PC-3 (cell line): ENCODE measurements at regions of chr7 and their contacts with region 1.

Region 1: GRCh38 chr7:74206589-74207120 is 3.2 kb upstream of the LAT2 start:
- DNase-seq: peak; percentile 87
- ATAC-seq: peak; percentile 52
- H3K4me3 ChIP-seq: peak overlapping the region; percentile 23; the same call in 1 of the 2 replicates
- H3K27ac ChIP-seq: no peak overlapping the region
- H3K4me1 ChIP-seq: peaks cover 13% of the 10 kb centered on the region
- H3K27me3 ChIP-seq: no peaks in the 10 kb centered on the region
- CTCF ChIP-seq: peak; percentile 92

Region 2: DNA sequence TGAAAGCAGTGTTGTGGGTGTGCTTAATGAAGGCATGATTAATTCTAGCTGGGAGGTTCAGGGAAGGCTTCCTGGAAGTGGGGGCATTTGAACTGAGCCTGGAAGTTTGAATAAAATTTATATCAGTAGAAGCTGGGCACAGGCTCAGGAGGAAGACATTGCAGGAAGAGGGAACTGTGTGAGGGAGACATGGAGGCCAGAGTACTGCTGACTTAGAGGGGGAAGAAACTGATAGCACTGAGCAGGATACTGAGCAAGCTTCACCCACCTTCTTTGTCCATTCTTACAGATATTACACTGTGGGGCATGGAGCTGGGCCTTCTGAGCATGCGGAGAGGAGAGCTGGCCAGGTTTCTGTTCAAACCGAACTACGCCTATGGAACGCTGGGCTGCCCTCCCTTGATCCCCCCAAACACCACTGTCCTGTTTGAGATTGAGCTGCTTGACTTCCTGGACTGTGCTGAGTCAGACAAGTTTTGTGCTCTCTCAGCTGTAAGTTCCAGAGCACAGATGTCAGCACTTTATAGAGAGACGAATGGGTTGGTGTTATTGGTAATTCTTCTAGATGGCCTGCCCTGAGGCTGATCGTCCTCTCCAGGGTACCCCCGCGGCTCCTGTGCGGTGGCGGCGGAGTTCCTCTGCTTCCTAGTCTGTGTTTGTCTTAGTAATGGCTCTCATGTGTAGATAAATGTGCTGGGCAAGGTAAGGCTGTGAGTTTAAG is 876.6 kb before region 1 on chr7:
- CTCF ChIA-PET with region 1: no interaction called
- POLR2A ChIA-PET with region 1: no interaction called
- intact Hi-C with region 1: no loop called
- DNase-seq: no peak
- ATAC-seq: peak; percentile 59
- H3K4me3 ChIP-seq: no peak overlapping the region
- H3K27ac ChIP-seq: no peak overlapping the region
- H3K4me1 ChIP-seq: no peaks in the 10 kb centered on the region
- H3K27me3 ChIP-seq: no peaks in the 10 kb centered on the region
- CTCF ChIP-seq: no peak

Region 3: GRCh38 chr7:74051629-74052410 is 154.8 kb before region 1 on chr7:
- CTCF ChIA-PET with region 1: interaction called, 4 read pairs
- POLR2A ChIA-PET with region 1: no interaction called
- intact Hi-C with region 1: loop called (anchors 5 kb)
- DNase-seq: peak; percentile 67
- ATAC-seq: peak; percentile 94
- H3K4me3 ChIP-seq: no peak overlapping the region
- H3K27ac ChIP-seq: no peak overlapping the region
- H3K4me1 ChIP-seq: no peaks in the 10 kb centered on the region
- H3K27me3 ChIP-seq: no peaks in the 10 kb centered on the region
- CTCF ChIP-seq: peak; percentile 68

Region 4: GRCh38 chr7:74254129-74254857 is 47.6 kb after region 1 on chr7 and contains the start of gene RFC2:
- CTCF ChIA-PET with region 1: interaction called, 4 read pairs
- POLR2A ChIA-PET with region 1: no interaction called
- intact Hi-C with region 1: loop called (anchors 5 kb)
- DNase-seq: peak; percentile 95
- ATAC-seq: peak; percentile 91
- H3K4me3 ChIP-seq: peak within 1 kb of the TSS; percentile 95
- H3K27ac ChIP-seq: peak within 1 kb of the TSS; percentile 76
- H3K4me1 ChIP-seq: peaks cover 11% of the 10 kb centered on the region
- H3K27me3 ChIP-seq: no peaks in the 10 kb centered on the region
- CTCF ChIP-seq: no peak
- total RNA-seq, gene RFC2: 57.4 and 60.4 TPM in 2 replicates

Region 5: DNA sequence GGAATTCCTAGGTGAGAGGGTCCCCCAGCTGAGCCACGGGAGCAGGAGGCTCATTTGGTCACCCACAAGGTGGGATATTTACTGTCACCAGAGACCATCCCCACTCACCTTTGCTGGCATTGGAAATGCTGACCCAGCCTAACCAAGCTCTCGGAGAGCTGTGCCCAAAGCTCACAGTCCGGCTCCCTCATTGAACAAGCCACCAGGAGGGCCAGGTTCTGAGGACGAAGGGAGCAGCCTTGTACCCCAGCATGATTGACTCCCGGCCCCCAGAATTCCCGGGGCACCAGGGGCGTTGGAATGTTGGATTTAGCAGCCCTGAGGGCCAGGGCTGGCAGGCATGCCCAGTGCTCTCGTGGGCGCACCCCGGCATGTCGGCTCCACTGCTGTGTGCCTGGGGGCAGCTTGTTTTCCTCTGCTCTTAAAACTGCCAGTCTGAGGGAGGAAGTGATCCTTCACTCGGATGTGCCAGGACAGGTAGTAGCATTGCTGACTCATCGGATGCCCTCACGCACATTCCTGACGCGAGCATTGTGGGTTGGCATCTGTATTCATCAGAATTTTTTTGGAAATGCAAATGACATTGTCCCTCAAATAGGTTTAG is 105.9 kb after region 1 on chr7:
- CTCF ChIA-PET with region 1: interaction called, 3 read pairs
- POLR2A ChIA-PET with region 1: no interaction called
- intact Hi-C with region 1: loop called (anchors 10 kb)
- DNase-seq: peak; percentile 95
- ATAC-seq: peak; percentile 84
- H3K4me3 ChIP-seq: peak overlapping the region; percentile 50; the same call in 1 of the 2 replicates
- H3K27ac ChIP-seq: peak overlapping the region; percentile 99
- H3K4me1 ChIP-seq: peaks cover 31% of the 10 kb centered on the region
- H3K27me3 ChIP-seq: no peaks in the 10 kb centered on the region
- CTCF ChIP-seq: no peak

Region 6: GRCh38 chr7:74401137-74401859 is 194.6 kb after region 1 on chr7:
- CTCF ChIA-PET with region 1: interaction called, 30 read pairs
- POLR2A ChIA-PET with region 1: no interaction called
- intact Hi-C with region 1: loop called (anchors 1 kb)
- DNase-seq: peak; percentile 78
- ATAC-seq: peak; percentile 72
- H3K4me3 ChIP-seq: no peak overlapping the region
- H3K27ac ChIP-seq: no peak overlapping the region
- H3K4me1 ChIP-seq: no peaks in the 10 kb centered on the region
- H3K27me3 ChIP-seq: no peaks in the 10 kb centered on the region
- CTCF ChIP-seq: peak; percentile 95